ENCODE measurements at regions of chr1 and their contacts with region 1.

Region 1: GRCh38 chr1:186680245-186681061 is at the start of gene PTGS2:
- DNase-seq: peak; percentile 82
- H3K4me3 Mint-ChIP-seq: peak within 1 kb of the TSS; percentile 85
- H3K27ac Mint-ChIP-seq: peak within 1 kb of the TSS; percentile 31
- H3K4me1 Mint-ChIP-seq: peaks cover 15% of the 10 kb centered on the region
- H3K27me3 Mint-ChIP-seq: peaks cover 64% of the 10 kb centered on the region
- total RNA-seq, gene PTGS2: 1.1 TPM in 2 replicates

Region 2: GRCh38 chr1:186295980-186296379 is 384.5 kb before region 1 on chr1:
- intact Hi-C with region 1: no loop called
- DNase-seq: no peak
- H3K4me3 Mint-ChIP-seq: peak within 1 kb of the TSS; percentile 56
- H3K27ac Mint-ChIP-seq: peak within 1 kb of the TSS; percentile 45
- H3K4me1 Mint-ChIP-seq: peaks cover 44% of the 10 kb centered on the region
- H3K27me3 Mint-ChIP-seq: no peaks in the 10 kb centered on the region

Region 3: GRCh38 chr1:186404454-186405051 is 275.9 kb before region 1 on chr1:
- intact Hi-C with region 1: loop called (anchors 5 kb)
- DNase-seq: peak; percentile 74
- H3K4me3 Mint-ChIP-seq: no peak overlapping the region
- H3K27ac Mint-ChIP-seq: no peak overlapping the region
- H3K4me1 Mint-ChIP-seq: peaks cover 9% of the 10 kb centered on the region
- H3K27me3 Mint-ChIP-seq: no peaks in the 10 kb centered on the region

Region 4: DNA sequence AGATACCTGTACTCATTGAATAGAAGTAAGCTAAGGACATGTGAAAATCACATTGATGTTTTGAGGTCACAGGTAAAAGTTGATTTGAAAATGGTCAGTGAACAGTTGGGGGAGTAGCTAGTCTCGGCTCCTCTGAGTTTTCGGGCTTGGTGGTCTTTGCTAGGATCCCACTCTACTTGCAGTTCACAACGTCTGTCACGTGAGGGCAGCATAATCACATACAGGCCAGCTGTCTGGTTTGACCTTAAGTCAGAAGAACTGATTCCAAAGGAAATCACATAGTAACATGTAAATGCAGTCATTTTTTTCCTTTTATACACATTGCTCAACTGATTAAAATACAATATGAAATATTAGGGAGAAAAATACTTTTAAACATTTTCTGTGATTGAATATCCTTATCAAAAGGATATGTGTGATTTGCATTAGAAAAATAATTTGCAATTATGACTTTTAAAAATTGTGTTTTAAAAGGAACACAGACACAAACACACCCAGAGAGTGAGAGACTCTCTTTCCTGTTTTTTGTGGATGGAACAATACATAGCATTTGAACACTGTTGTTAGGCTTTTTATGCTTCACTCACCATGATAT is 197.7 kb before region 1 on chr1:
- intact Hi-C with region 1: loop called (anchors 10 kb)
- DNase-seq: peak; percentile 82
- H3K4me3 Mint-ChIP-seq: no peak overlapping the region
- H3K27ac Mint-ChIP-seq: no peak overlapping the region
- H3K4me1 Mint-ChIP-seq: no peaks in the 10 kb centered on the region
- H3K27me3 Mint-ChIP-seq: peaks cover 20% of the 10 kb centered on the region

Region 5: DNA sequence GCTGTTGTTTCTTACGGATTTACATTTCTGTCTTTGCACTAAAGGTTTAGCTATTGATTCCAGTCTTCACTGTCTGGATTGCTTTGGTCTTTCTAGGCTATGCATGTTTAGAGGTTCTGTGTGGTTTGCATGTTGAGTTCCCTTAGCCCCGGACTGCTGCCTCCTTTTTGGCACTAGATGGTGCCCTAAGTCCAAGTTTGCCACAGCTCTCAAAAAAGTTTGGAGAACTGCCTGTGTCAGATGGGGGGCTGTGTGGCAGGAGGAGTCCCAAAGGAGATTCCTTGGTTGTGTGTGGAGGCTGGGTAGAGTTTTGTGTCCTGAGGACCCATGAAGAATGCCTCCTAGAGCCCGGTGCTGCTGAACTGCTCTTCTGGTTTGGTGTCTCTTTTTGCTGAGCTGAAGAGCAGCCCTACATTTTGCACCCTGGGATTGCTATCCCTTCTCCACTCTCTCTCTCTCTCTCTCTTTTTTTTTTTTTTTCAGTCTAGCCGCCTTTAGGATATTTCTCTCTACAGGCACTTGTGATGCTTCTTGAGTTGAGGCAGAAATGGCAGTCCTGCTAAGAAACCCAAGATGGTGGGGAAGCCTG is 74.6 kb before region 1 on chr1:
- intact Hi-C with region 1: loop called (anchors 5 kb)
- DNase-seq: peak; percentile 80
- H3K4me3 Mint-ChIP-seq: no peak overlapping the region
- H3K27ac Mint-ChIP-seq: no peak overlapping the region
- H3K4me1 Mint-ChIP-seq: no peaks in the 10 kb centered on the region
- H3K27me3 Mint-ChIP-seq: peaks cover 44% of the 10 kb centered on the region

Region 6: DNA sequence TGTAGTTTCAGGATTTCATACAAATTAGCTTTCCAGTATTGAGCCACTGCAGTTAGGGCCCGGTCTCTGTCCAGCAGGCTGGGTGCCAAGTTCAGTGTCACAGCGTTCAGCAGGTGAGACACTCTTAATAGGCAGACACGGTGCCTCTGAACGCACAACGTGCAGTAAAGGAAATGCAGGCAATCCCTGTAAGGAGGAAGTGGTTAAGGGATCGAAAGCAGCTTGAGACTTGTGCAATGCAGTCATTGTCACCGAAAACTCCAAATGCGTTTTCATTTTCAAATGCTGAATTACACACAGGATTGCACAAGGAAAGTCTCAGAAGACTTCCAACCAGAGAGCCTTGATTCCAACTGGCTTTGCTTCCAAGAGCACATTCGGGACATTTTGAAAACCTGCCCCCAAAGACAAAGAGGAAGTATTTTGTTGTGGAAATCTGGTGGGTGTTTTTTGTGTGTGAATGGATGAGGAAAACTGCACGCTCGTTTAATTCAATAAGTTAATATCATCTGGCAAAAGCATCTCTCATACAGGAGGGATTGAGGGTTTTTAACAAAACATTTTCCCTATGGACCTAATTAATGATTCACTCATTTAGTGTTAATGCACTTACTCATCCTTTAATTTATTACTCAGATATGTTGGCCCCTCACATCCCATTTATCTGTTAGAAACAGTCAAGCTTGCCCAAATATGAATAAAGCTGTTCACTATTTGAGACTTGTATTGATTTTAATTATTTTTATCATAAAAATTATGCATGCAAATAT is 61.9 kb before region 1 on chr1:
- intact Hi-C with region 1: loop called (anchors 5 kb)
- DNase-seq: peak; percentile 88
- H3K4me3 Mint-ChIP-seq: peak overlapping the region; percentile 77
- H3K27ac Mint-ChIP-seq: no peak overlapping the region
- H3K4me1 Mint-ChIP-seq: peaks cover 37% of the 10 kb centered on the region
- H3K27me3 Mint-ChIP-seq: peaks cover 18% of the 10 kb centered on the region

Region 7: DNA sequence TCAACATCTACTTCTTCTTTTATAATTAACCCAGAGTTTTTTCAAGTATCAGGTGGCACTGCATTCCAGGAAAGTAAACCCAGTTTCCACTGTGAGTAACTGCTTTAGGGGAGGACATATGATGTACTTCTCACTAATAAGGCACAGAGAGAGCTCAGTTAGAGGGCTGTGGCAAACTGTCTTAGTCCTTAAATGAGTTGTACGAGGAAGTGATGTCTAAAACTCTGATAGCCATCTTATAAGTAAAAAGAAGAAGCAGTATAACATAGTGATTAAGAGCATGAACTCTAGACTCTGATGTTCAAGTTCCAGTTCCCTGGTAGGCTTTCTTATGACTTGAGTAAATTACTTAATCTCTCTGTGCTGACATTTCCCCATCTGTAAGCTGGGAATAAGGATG is 58.5 kb after region 1 on chr1:
- intact Hi-C with region 1: loop called (anchors 2 kb)
- DNase-seq: peak; percentile 69
- H3K4me3 Mint-ChIP-seq: peak overlapping the region; percentile 46
- H3K27ac Mint-ChIP-seq: peak overlapping the region; percentile 35
- H3K4me1 Mint-ChIP-seq: peaks cover 27% of the 10 kb centered on the region
- H3K27me3 Mint-ChIP-seq: no peaks in the 10 kb centered on the region